Left cardiac atrium (tissue), 4 donors: ENCODE measurements at regions of chr10 and their contacts with region 1.

Region 1: DNA sequence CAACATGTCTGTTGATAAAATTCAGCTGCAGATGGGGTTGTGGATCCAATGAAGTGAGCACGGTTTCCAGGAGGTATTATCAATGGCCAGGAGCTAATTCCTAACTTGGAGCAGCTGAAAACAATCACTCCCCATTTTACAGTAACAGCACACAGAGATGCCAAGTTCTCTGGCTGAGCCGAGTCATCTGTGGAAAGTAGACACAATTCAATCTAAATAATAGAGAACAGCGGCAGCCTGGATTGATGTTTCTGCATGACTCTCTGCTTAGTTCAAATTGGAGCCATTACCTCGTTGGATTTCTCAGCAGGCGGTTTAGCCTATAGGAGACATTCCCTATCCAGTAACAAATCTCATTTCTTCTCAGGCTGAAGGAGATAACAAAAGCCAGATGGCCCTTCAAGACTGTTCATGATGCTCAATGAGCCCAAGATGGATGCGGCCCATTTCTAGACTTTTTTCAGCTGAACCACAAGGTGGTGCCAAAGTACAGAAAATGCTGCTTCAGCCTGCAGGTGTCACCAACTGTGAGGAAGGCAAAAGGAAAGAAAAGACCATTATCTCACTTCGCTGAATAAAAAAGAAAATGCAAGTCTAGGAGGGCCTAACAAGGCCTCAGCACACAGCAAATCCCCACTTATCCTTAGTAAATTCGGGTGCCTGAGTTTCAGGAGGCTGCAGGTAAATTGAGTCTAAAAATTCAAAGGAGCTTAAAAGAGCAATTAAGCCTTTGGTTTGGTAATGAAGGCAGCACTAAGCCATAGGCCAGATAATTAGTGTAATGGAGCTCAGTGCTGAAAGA is 83.7 kb downstream of the SLC16A9 start:
- DNase-seq: no peak
- ATAC-seq: peak; percentile 73 to 84

Region 2: GRCh38 chr10:58952747-58953466 is 673.0 kb before region 1 on chr10:
- intact Hi-C with region 1: loop called in 1 of 2 experiments (anchors 5 kb)
- DNase-seq: peak; percentile 38
- ATAC-seq: peak; percentile 66 to 82

Region 3: DNA sequence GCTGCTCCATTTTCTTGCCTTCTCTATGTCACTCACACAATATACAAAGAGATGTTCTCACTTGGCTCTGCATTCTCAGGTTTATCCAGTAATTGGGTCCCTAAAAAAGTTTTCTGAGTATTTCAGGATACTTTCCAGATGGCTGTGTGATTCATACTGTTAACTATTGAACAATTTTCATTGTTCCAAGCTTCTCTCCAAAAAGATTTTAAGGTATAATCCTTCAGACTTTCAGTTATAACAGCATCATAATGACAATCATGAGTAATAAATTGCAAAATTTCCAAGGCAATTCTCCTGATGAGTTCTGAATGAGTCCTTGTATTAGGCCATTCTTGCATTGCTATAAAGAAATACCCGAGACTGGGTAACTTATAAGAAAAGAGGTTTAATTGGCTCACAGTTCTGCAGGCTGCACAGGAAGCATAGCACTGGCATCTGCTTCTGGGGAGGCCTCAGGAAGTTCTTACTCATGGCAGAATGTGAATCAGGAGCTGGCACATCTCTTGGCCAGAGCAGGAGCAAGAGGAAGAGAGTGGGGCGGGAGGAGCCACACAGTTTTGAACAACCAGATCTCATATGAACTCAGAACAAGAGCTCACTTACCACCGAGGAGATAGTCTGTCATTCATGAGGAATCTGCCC is 64.3 kb before region 1 on chr10:
- intact Hi-C with region 1: no loop called
- DNase-seq: no peak
- ATAC-seq: peak in 1 of 2 donors; percentile 48

Region 4: GRCh38 chr10:59709395-59710125 is 83.6 kb after region 1 on chr10 and contains the start of gene SLC16A9:
- intact Hi-C with region 1: no loop called
- DNase-seq: peak; percentile 46
- ATAC-seq: peak; percentile 89 to 93
- total RNA-seq, gene SLC16A9: 0.42 to 1.2 TPM

Region 5: GRCh38 chr10:59808896-59809643 is 183.1 kb after region 1 on chr10:
- intact Hi-C with region 1: loop called (anchors 5 kb)
- DNase-seq: peak; percentile 75
- ATAC-seq: peak; percentile 86 to 89

Region 6: GRCh38 chr10:59833807-59834206 is 207.9 kb after region 1 on chr10:
- intact Hi-C with region 1: loop called in 1 of 2 experiments (anchors 2 kb)
- DNase-seq: no peak
- ATAC-seq: peak in 1 of 2 donors; percentile 23

Region 7: GRCh38 chr10:60032723-60033122 is 406.8 kb after region 1 on chr10:
- intact Hi-C with region 1: loop called in 1 of 2 experiments (anchors 10 kb)
- DNase-seq: peak; percentile 28
- ATAC-seq: peak; percentile 91 to 92